Mammary epithelial cell (primary cell): ENCODE measurements at regions of chr7 and their contacts with region 1.

Region 1: GRCh38 chr7:151085691-151086620 is at the start of gene AGAP3:
- DNase-seq: peak; percentile 51
- H3K4me3 ChIP-seq: peak within 1 kb of the TSS; percentile 85 to 93 (median 92)
- H3K27ac ChIP-seq: peak within 1 kb of the TSS; percentile 77
- H3K4me1 ChIP-seq: peaks cover 51% of the 10 kb centered on the region
- H3K27me3 ChIP-seq: no peaks in the 10 kb centered on the region
- CTCF ChIP-seq: no peak
- total RNA-seq, gene AGAP3: 118 to 163 TPM

Region 2: DNA sequence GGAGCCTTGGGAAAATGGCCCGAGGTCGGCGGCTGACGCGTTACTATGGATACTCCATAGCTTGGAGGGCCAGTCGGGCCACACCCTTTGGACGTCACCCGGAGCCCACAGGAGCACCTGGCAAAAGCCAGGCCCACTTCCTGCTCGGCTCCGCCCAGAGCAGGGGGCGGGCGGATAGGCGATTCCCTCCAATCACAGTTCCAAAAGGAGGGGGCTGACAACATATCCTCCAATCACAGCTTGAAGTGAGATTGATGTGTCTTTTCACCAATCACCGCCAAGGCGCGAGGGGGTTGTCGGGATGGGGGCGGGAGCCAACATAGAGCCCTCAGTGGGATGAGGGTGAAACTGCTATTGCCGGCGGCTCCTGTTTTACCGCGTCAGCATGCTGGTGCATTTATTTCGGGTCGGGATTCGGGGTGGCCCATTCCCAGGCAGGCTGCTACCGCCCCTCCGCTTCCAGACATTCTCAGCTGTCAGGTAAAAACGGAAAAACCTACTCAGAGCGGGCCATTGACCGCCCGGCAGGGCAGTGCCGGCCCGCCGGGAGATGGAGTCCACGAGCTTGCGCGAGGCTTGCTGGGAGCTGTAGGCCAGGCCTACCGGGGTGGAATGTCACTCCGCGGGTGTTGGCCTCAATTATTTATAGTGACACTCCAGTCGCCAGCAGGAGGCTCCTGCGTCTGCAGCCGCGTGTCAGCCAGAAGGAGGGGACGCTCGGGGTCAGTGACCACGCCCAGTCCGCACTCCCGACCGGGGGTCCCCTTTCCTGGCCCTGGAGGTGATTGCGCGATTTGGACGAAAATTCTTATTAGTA is 57.6 kb before region 1 on chr7 and contains the start of gene ABCB8:
- CTCF ChIA-PET with region 1: interaction called, 3 read pairs
- dilution Hi-C with region 1: loop called (anchors 5 kb)
- in situ Hi-C with region 1: no loop called
- intact Hi-C with region 1: loop called (anchors 1 kb)
- DNase-seq: peak; percentile 99
- H3K4me3 ChIP-seq: peak within 1 kb of the TSS; percentile 60 to 80 (median 73)
- H3K27ac ChIP-seq: peak within 1 kb of the TSS; percentile 93
- H3K4me1 ChIP-seq: peaks cover 29% of the 10 kb centered on the region
- H3K27me3 ChIP-seq: no peaks in the 10 kb centered on the region
- CTCF ChIP-seq: peak in 1 of 2 donors; percentile 61
- total RNA-seq, gene ABCB8: 29.8 to 57.2 TPM

Region 3: DNA sequence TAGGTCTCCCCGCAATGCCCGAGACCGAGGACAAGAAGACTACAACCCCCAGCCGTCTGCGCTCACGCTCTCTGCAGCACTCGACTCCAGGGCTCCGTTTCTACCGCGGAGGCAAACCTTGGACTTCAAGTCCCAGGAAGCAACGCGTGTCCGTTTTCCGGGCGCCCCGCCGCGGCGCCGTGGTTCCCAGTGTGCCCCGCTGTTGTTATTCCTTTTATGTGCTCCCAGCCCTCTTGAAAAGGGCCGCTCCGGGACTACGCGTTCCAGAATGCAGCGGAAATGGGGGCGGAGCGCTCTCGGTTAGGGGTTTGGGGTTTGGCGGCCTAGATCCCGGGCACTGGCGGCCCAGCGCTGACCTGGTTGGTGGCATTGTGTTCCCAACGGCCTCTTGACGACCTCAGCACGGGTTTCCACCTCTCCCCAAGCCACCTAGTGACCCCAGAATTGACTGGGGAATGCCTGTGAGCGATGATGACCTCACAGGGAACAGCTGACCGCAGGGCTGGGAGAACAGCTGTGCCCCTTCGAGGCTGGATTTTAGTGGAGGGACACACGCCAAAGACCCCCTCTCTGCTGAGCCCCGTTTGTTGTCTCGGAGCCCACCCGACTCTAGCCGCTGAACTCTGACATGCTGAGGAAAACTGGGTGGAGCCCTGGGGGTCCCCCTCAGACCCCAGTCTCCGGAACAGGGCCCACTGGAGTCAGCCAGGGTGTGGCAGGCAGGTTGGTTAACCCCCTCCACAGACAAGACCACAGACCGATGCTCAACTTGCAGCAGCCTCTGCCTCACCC is 27.8 kb before region 1 on chr7:
- CTCF ChIA-PET with region 1: no interaction called
- dilution Hi-C with region 1: no loop called
- in situ Hi-C with region 1: no loop called
- intact Hi-C with region 1: loop called (anchors 2 kb)
- DNase-seq: peak; percentile 99
- H3K4me3 ChIP-seq: peak overlapping the region; percentile 57 to 74 (median 65)
- H3K27ac ChIP-seq: peak overlapping the region; percentile 88
- H3K4me1 ChIP-seq: peaks cover 49% of the 10 kb centered on the region
- H3K27me3 ChIP-seq: no peaks in the 10 kb centered on the region
- CTCF ChIP-seq: peak in 1 of 2 donors; percentile 12

Region 4: GRCh38 chr7:151143261-151144015 is 57.5 kb after region 1 on chr7:
- CTCF ChIA-PET with region 1: no interaction called
- dilution Hi-C with region 1: loop called (anchors 5 kb)
- in situ Hi-C with region 1: no loop called
- intact Hi-C with region 1: no loop called
- DNase-seq: no peak
- H3K4me3 ChIP-seq: no peak overlapping the region
- H3K27ac ChIP-seq: no peak overlapping the region
- H3K4me1 ChIP-seq: peaks cover 25% of the 10 kb centered on the region
- H3K27me3 ChIP-seq: no peaks in the 10 kb centered on the region
- CTCF ChIP-seq: no peak